ENCODE measurements at regions of chr7 and their contacts with region 1.

Region 1: DNA sequence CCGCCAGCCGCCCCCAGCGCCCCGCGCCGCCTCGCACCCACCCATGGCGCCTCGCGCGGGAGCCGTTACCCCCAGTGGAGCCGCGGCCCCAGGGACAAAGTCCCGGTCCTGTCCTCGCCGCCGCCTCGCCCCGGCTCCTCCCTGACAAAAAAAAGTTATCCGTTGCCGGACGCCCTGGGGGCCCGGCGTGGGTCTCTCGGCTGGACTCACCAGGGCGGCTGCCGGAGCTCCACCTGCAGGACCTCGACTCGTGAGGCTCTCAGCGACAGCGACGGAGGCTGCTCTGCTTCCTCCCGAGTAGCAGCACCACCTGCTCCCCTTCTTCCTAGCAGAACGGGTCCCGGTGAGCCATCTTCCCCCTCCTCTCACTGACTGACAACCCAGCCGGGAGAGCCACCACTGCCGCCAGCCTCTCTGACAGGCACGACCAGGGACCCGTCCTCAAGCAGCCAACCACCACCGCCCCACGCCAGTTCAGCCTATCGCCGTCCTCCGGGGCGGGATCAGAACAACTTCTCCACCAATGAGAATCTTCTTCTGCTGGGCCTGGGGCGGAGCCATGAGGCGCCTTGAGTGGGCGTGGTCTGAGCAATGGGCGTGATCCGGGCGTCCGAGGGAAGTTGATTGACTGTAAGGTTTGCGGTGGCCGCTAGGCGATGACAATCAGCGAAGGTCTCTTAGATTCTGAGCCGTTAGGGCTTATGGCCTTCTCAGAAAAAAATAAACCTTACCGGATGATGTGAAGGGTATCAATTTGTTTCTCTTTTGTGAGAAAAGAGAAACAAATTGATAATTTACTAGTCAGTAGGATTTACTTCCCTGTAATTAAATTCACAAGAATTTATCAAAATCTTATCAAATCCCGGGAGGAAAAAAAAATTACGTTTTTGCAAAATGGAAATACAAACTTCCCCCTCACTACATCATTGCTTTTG is at the start of gene HYCC1:
- DNase-seq: peak; percentile 99
- ATAC-seq: peak; percentile 96
- H3K4me3 ChIP-seq: peak within 1 kb of the TSS; percentile 68 to 85 (median 80)
- H3K4me3 Mint-ChIP-seq: peak within 1 kb of the TSS; percentile 99
- H3K27ac ChIP-seq: peak within 1 kb of the TSS; percentile 63 to 70
- H3K27ac Mint-ChIP-seq: peak within 1 kb of the TSS; percentile 98
- H3K4me1 ChIP-seq: peaks cover 73 to 74% of the 10 kb centered on the region in 2 donors
- H3K4me1 Mint-ChIP-seq: peaks cover 42% of the 10 kb centered on the region
- H3K27me3 ChIP-seq: no peaks in the 10 kb centered on the region
- H3K27me3 Mint-ChIP-seq: no peaks in the 10 kb centered on the region
- CTCF ChIP-seq: peak; percentile 72
- total RNA-seq, gene HYCC1: 39.6 and 40.8 TPM in 2 replicates

Region 2: GRCh38 chr7:21945454-21946227 is 1068.3 kb before region 1 on chr7 and contains the start of gene CDCA7L:
- CTCF ChIA-PET with region 1: no interaction called
- POLR2A ChIA-PET with region 1: no interaction called
- intact Hi-C with region 1: loop called (anchors 10 kb)
- DNase-seq: peak; percentile 96
- ATAC-seq: peak; percentile 80
- H3K4me3 ChIP-seq: peak within 1 kb of the TSS; percentile 74 to 95 (median 81)
- H3K4me3 Mint-ChIP-seq: peak within 1 kb of the TSS; percentile 97
- H3K27ac ChIP-seq: peak within 1 kb of the TSS; percentile 97 to 98
- H3K27ac Mint-ChIP-seq: peak within 1 kb of the TSS; percentile 99
- H3K4me1 ChIP-seq: peaks cover 56 to 63% of the 10 kb centered on the region in 2 donors
- H3K4me1 Mint-ChIP-seq: peaks cover 65% of the 10 kb centered on the region
- H3K27me3 ChIP-seq: no peaks in the 10 kb centered on the region
- H3K27me3 Mint-ChIP-seq: no peaks in the 10 kb centered on the region
- CTCF ChIP-seq: peak; percentile 17
- total RNA-seq, gene CDCA7L: 126 and 129 TPM in 2 replicates

Region 3: GRCh38 chr7:22854158-22855048 is 159.6 kb before region 1 on chr7:
- CTCF ChIA-PET with region 1: no interaction called
- POLR2A ChIA-PET with region 1: no interaction called
- intact Hi-C with region 1: loop called (anchors 1 kb)
- DNase-seq: peak; percentile 88
- ATAC-seq: peak; percentile 83
- H3K4me3 ChIP-seq: peak overlapping the region; percentile 74 to 87 (median 80)
- H3K4me3 Mint-ChIP-seq: peak overlapping the region; percentile 97
- H3K27ac ChIP-seq: peak overlapping the region; percentile 71 to 87
- H3K27ac Mint-ChIP-seq: peak overlapping the region; percentile 94
- H3K4me1 ChIP-seq: peaks cover 17 to 27% of the 10 kb centered on the region in 2 donors
- H3K4me1 Mint-ChIP-seq: peaks cover 38% of the 10 kb centered on the region
- H3K27me3 ChIP-seq: no peaks in the 10 kb centered on the region
- H3K27me3 Mint-ChIP-seq: no peaks in the 10 kb centered on the region
- CTCF ChIP-seq: peak; percentile 84

Region 4: GRCh38 chr7:22885797-22886261 is 128.2 kb before region 1 on chr7:
- CTCF ChIA-PET with region 1: no interaction called
- POLR2A ChIA-PET with region 1: no interaction called
- intact Hi-C with region 1: no loop called
- DNase-seq: peak; percentile 35
- ATAC-seq: peak; percentile 75
- H3K4me3 ChIP-seq: no peak overlapping the region
- H3K4me3 Mint-ChIP-seq: peak overlapping the region; percentile 13
- H3K27ac ChIP-seq: peak overlapping the region in 1 of 2 donors; percentile 24
- H3K27ac Mint-ChIP-seq: no peak overlapping the region
- H3K4me1 ChIP-seq: peaks cover 5 to 10% of the 10 kb centered on the region in 2 donors
- H3K4me1 Mint-ChIP-seq: peaks cover 13% of the 10 kb centered on the region
- H3K27me3 ChIP-seq: no peaks in the 10 kb centered on the region
- H3K27me3 Mint-ChIP-seq: no peaks in the 10 kb centered on the region
- CTCF ChIP-seq: no peak

Region 5: DNA sequence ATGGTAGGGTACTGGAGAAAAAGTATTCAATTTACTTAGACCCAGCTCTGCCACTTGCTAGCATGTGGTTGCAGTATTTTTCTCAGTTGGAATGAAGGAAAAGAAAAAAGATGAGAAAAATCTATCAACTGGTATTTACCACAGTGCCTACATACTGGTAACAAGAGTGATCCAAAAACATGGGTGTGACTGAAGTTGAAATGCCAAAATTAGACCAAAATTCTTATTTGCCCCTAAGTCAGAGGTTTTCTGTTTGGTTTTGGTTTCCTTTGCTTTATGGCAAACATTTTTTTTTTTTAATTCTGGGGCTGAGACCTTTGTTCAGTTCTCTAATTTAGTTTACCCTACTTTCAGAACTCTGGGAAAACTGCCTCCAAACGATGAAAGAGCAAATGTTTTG is 12.4 kb before region 1 on chr7:
- CTCF ChIA-PET with region 1: interaction called, 3 read pairs
- POLR2A ChIA-PET with region 1: no interaction called
- intact Hi-C with region 1: loop called (anchors 1 kb)
- DNase-seq: no peak
- ATAC-seq: no peak
- H3K4me3 ChIP-seq: no peak overlapping the region
- H3K4me3 Mint-ChIP-seq: no peak overlapping the region
- H3K27ac ChIP-seq: peak overlapping the region in 1 of 2 donors; percentile 63
- H3K27ac Mint-ChIP-seq: peak overlapping the region; percentile 17
- H3K4me1 ChIP-seq: peaks cover 17 to 54% of the 10 kb centered on the region in 2 donors
- H3K4me1 Mint-ChIP-seq: peaks cover 63% of the 10 kb centered on the region
- H3K27me3 ChIP-seq: no peaks in the 10 kb centered on the region
- H3K27me3 Mint-ChIP-seq: no peaks in the 10 kb centered on the region
- CTCF ChIP-seq: no peak

Region 6: GRCh38 chr7:23298885-23299769 is 285.1 kb after region 1 on chr7 and contains the start of gene MALSU1:
- CTCF ChIA-PET with region 1: no interaction called
- POLR2A ChIA-PET with region 1: no interaction called
- intact Hi-C with region 1: loop called (anchors 2 kb)
- DNase-seq: peak; percentile 98
- ATAC-seq: peak; percentile 100
- H3K4me3 ChIP-seq: peak within 1 kb of the TSS; percentile 70 to 95 (median 86)
- H3K4me3 Mint-ChIP-seq: peak within 1 kb of the TSS; percentile 87
- H3K27ac ChIP-seq: peak within 1 kb of the TSS; percentile 73 to 86
- H3K27ac Mint-ChIP-seq: peak within 1 kb of the TSS; percentile 94
- H3K4me1 ChIP-seq: peaks cover 16 to 23% of the 10 kb centered on the region in 2 donors
- H3K4me1 Mint-ChIP-seq: peaks cover 39% of the 10 kb centered on the region
- H3K27me3 ChIP-seq: peaks cover 0 to 6% (median 0%) of the 10 kb centered on the region in 4 experiments
- H3K27me3 Mint-ChIP-seq: no peaks in the 10 kb centered on the region
- CTCF ChIP-seq: no peak
- total RNA-seq, gene MALSU1: 38.0 and 40.8 TPM in 2 replicates

Region 7: GRCh38 chr7:23570592-23571200 is 556.7 kb after region 1 on chr7:
- CTCF ChIA-PET with region 1: no interaction called
- POLR2A ChIA-PET with region 1: no interaction called
- intact Hi-C with region 1: no loop called
- DNase-seq: peak; percentile 77
- ATAC-seq: peak; percentile 91
- H3K4me3 ChIP-seq: no peak overlapping the region
- H3K4me3 Mint-ChIP-seq: peak overlapping the region; percentile 57
- H3K27ac ChIP-seq: no peak overlapping the region
- H3K27ac Mint-ChIP-seq: no peak overlapping the region
- H3K4me1 ChIP-seq: no peaks in the 10 kb centered on the region
- H3K4me1 Mint-ChIP-seq: peaks cover 3% of the 10 kb centered on the region
- H3K27me3 ChIP-seq: peaks cover 0 to 4% (median 0%) of the 10 kb centered on the region in 4 experiments
- H3K27me3 Mint-ChIP-seq: peaks cover 10% of the 10 kb centered on the region
- CTCF ChIP-seq: peak; percentile 84

Measured in B cell (primary cell).